Adrenal gland (tissue), 19 donors: ENCODE measurements at regions of chr12 and their contacts with region 1.

Region 1: DNA sequence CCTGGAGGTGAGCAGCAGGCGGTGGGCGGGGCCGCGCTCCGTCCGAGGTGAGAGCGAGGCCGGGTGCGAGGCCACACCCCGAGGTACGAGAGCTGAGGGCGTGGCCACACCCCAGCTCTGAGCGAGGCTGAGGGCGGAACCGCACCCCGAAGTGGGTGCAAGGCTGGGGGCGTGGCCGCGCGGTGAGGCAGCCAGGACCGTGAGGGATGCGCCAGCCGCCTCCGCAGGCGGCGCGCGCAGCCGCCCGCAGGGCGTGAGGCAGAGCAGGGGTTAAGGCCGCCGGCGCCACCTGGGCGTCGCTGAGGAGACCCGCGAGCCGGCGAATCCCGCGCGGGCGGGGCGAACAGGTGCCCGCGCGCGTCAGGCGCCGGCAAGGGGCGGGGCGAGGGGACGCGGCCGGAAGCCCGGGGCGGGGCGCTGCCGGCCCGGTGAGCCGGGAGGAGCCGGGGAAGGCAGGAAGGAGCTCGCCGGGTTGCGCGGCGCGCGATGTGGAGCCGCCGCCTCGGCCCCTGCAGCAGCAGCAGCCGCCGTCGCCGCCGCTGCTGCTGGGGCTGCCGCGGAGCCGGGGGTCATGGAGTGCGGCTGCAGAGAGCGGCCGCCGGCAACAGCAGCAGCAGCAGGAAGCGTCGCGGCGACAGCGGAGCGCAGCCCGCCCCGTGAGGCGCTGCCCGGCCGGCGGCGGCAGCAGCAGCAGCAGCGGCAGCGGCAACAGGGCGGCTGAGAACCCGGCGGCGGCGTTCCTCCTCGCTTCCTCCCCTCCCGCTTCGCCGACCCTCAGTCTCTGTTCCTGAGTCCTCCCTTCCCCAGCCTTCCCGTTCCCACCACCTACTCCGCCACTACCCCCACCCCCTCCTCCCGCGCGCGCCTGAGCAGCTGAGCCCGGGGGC is at the start of gene BICDL1:
- DNase-seq: peak; percentile 48 to 91 (median 75)
- H3K4me3 ChIP-seq: peak within 1 kb of the TSS in 2 of 4 donors; percentile 10 to 80
- H3K27ac ChIP-seq: peak within 1 kb of the TSS in 3 of 5 donors; percentile 35 to 81 (median 69)
- H3K4me1 ChIP-seq: peaks cover 3 to 14% of the 10 kb centered on the region in 2 donors
- H3K27me3 ChIP-seq: no peaks in the 10 kb centered on the region
- CTCF ChIP-seq: no peak
- POLR2A ChIP-seq: peak; percentile 21 to 45
- total RNA-seq, gene BICDL1: 0.35 to 4.9 (median 1.5) TPM

Region 2: DNA sequence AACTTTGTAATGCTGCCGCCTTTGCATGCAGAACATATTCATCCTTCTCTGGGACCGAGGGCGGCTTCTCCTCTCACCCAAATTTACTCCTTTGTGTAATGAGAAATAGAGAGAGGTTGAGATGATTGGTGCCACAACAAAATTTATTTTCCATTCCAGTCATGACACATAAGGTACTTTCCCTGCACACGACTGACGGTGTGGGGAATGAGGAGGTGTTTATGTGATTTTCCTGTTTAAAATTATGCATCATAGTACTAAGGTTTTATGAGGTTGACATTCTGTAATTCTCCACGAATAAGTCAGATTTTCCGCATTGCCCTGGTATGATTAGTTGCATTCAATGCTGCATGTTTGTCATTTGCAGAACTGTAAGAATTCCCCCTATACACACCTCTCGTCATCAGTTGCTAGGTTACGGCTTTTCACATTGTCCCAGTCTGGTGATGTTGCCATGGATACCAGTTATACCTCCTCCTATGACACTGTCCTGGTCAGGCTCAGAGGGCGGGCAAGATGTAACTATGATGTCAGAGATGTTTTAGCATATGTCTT is 23.1 kb after region 1 on chr12:
- intact Hi-C with region 1: no loop called
- DNase-seq: no peak
- H3K4me3 ChIP-seq: no peak overlapping the region
- H3K27ac ChIP-seq: no peak overlapping the region
- H3K4me1 ChIP-seq: peaks cover 0 to 4% of the 10 kb centered on the region in 2 donors
- H3K27me3 ChIP-seq: no peaks in the 10 kb centered on the region
- CTCF ChIP-seq: no peak
- POLR2A ChIP-seq: no peak

Region 3: DNA sequence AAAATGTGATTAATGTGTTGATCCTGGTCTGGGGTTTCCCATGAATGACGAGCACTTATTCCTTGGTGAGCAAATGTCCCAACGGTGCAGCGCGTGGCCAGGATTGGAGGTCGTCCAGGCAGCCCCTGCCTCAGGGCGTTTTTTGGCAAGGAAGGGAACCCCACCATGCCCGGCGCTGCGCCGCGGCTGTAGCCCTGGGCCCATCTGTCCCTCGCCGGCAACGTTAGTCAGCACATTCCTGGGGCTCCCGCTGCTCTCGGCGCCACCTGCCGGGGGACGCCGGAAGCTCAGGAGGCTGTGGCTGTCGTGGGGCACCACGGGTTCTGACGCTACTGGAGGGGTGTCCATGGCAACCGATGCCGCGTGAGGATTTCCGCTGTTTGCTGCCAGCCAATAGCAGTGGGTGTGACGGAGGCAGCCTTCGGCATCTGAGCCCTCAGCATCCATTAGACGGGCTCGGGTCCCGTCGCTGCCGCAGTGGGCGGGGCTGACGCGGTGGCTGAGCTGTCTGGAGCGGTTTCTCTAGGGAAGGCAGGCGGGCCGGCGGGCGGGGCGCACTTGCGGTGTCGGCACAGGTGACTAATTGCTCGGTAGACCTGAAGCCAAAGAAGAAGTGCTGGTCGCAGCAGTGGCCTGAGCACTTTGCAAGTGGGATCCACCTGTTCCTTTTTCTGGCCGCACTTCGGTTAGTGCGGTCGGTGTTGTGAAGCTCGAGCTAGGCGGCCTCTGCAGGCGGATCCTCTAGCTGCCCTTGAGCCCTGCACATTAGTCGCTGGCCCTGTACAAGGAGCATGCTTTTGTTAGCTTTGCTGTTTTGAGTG is 98.0 kb after region 1 on chr12:
- intact Hi-C with region 1: loop called in 1 of 2 experiments (anchors 5 kb)
- DNase-seq: peak; percentile 99 to 100 (median 100)
- H3K4me3 ChIP-seq: peak overlapping the region in 2 of 4 donors; percentile 12 to 59
- H3K27ac ChIP-seq: peak overlapping the region; percentile 35 to 87 (median 78)
- H3K4me1 ChIP-seq: peaks cover 0 to 13% of the 10 kb centered on the region in 2 donors
- H3K27me3 ChIP-seq: no peaks in the 10 kb centered on the region
- CTCF ChIP-seq: peak; percentile 86 to 99 (median 98)
- POLR2A ChIP-seq: peak; percentile 24 to 74

Region 4: DNA sequence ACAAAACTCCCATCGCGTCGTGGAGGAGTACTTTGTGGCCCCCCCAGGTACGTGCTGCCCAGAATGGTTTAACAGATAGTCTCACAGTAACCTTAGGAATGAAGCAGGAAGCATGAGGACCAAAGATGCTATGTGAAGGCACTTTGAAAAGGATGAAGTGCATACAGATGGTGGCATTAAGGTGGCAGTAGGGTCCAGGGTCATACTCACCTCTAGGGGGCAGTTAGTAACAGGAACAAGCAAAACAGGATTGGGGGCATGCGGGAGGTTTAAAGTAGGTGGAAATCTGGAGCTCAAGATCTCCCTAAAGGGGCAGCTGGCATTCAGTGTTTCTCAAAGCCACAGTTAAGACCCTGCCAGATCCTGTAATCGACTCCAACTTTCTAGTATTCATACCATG is 468.1 kb after region 1 on chr12:
- intact Hi-C with region 1: no loop called
- DNase-seq: no peak
- H3K4me3 ChIP-seq: no peak overlapping the region
- H3K27ac ChIP-seq: no peak overlapping the region
- H3K4me1 ChIP-seq: no peaks in the 10 kb centered on the region
- H3K27me3 ChIP-seq: no peaks in the 10 kb centered on the region
- CTCF ChIP-seq: peak in 1 of 6 experiments; percentile 9
- POLR2A ChIP-seq: no peak